CD8-positive, alpha-beta T cell (primary cell): ENCODE measurements at regions of chr3 and their contacts with region 1.

Region 1: GRCh38 chr3:47380601-47381316 is at the start of gene PTPN23:
- DNase-seq: peak; percentile 97 to 99 (median 99)
- ATAC-seq: peak; percentile 77
- H3K4me3 ChIP-seq: peak within 1 kb of the TSS; percentile 59 to 86
- H3K4me3 Mint-ChIP-seq: peak within 1 kb of the TSS; percentile 99
- H3K27ac ChIP-seq: peak within 1 kb of the TSS; percentile 76 to 97
- H3K27ac Mint-ChIP-seq: peak within 1 kb of the TSS; percentile 100
- H3K4me1 ChIP-seq: peaks cover 30% of the 10 kb centered on the region
- H3K4me1 Mint-ChIP-seq: peaks cover 49% of the 10 kb centered on the region
- H3K27me3 ChIP-seq: no peaks in the 10 kb centered on the region
- H3K27me3 Mint-ChIP-seq: no peaks in the 10 kb centered on the region
- CTCF ChIP-seq: no peak
- total RNA-seq, gene PTPN23: 39.2 to 48.3 TPM

Region 2: DNA sequence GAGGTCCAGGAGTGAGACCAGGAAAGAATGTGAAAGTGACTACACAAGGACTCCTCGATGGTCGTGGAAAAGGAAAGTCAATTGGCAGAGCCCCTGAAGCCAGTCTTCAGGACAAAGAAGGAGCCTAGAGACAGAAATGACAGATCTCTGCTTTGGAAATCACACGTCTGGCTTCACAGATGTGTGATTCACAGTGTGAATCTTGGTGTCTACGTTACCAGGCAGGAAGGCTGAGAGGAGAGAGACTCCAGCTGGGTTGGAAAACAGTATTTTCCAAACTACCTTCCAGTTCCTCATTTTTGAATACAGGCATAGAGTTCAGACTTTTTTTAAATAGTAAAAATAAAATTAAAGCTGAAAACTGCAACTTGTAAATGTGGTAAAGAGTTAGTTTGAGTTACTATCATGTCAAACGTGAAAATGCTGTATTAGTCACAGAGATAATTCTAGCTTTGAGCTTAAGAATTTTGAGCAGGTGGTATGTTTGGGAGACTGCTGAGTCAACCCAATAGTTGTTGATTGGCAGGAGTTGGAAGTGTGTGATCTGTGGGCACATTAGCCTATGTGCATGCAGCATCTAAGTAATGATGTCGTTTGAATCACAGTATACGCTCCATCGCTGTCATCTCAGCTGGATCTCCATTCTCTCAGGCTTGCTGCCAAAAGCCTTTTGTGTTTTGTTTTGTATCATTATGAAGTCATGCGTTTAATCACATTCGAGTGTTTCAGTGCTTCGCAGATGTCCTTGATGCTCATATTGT is 1020.8 kb before region 1 on chr3:
- CTCF ChIA-PET with region 1: no interaction called
- POLR2A ChIA-PET with region 1: no interaction called
- intact Hi-C with region 1: no loop called
- DNase-seq: peak in 2 of 9 experiments; percentile 29 to 48
- ATAC-seq: peak; percentile 82
- H3K4me3 ChIP-seq: no peak overlapping the region
- H3K4me3 Mint-ChIP-seq: no peak overlapping the region
- H3K27ac ChIP-seq: peak overlapping the region in 1 of 2 experiments; percentile 24
- H3K27ac Mint-ChIP-seq: peak overlapping the region; percentile 70
- H3K4me1 ChIP-seq: peaks cover 5% of the 10 kb centered on the region
- H3K4me1 Mint-ChIP-seq: peaks cover 48% of the 10 kb centered on the region
- H3K27me3 ChIP-seq: no peaks in the 10 kb centered on the region
- H3K27me3 Mint-ChIP-seq: peaks cover 4% of the 10 kb centered on the region
- CTCF ChIP-seq: no peak

Region 3: GRCh38 chr3:47009225-47010110 is 371.3 kb before region 1 on chr3:
- CTCF ChIA-PET with region 1: no interaction called
- POLR2A ChIA-PET with region 1: no interaction called
- intact Hi-C with region 1: loop called in 1 of 2 experiments (anchors 2 kb)
- DNase-seq: peak; percentile 43 to 92 (median 86)
- ATAC-seq: peak; percentile 91
- H3K4me3 ChIP-seq: peak overlapping the region; percentile 52 to 66
- H3K4me3 Mint-ChIP-seq: peak overlapping the region; percentile 70
- H3K27ac ChIP-seq: peak overlapping the region; percentile 56 to 64
- H3K27ac Mint-ChIP-seq: peak overlapping the region; percentile 83
- H3K4me1 ChIP-seq: peaks cover 8% of the 10 kb centered on the region
- H3K4me1 Mint-ChIP-seq: peaks cover 8% of the 10 kb centered on the region
- H3K27me3 ChIP-seq: no peaks in the 10 kb centered on the region
- H3K27me3 Mint-ChIP-seq: no peaks in the 10 kb centered on the region
- CTCF ChIP-seq: no peak

Region 4: DNA sequence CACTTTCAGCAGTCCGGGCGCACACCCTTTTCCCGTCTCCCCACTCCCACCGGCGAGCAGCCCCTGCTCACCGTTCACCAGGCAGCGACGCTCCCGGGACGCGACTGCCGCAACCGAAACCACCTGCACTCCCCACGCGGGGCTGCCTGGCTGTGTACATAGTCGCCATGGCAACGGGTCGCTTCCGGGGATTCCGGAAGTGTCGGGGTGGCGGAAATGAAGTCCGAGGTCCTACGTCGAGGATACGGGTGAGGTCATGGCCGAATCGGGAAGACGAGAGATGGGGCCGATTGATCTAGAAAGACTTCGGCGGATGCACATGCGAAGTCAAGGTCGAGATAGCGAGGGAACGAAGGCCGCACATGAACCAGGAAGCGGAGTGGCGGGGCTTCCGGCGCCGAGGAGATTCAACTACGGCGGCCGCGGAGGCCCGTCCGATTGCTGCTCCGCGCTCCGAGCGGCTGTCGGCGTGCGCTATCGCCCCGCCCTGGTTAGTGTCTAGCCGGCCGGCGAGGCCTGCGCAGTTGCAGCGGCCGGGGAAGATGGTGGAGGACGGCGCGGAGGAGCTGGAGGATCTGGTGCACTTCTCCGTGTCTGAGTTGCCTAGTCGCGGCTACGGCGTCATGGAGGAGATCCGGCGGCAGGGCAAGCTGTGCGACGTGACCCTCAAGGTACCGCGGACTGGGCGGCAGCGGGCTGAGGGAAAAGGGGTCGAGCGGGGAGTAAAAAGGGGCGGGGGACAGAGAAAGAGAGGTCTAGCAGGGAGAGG is 98.2 kb before region 1 on chr3 and contains the starts of genes KIF9 and KLHL18:
- CTCF ChIA-PET with region 1: no interaction called
- POLR2A ChIA-PET with region 1: interaction called, 5 read pairs
- intact Hi-C with region 1: loop called (anchors 1 kb)
- DNase-seq: peak; percentile 92 to 99 (median 96)
- ATAC-seq: peak; percentile 86
- H3K4me3 ChIP-seq: peak within 1 kb of the TSS; percentile 75 to 79
- H3K4me3 Mint-ChIP-seq: peak within 1 kb of the TSS; percentile 97
- H3K27ac ChIP-seq: peak within 1 kb of the TSS; percentile 98 to 99
- H3K27ac Mint-ChIP-seq: peak within 1 kb of the TSS; percentile 99
- H3K4me1 ChIP-seq: peaks cover 32% of the 10 kb centered on the region
- H3K4me1 Mint-ChIP-seq: peaks cover 40% of the 10 kb centered on the region
- H3K27me3 ChIP-seq: no peaks in the 10 kb centered on the region
- H3K27me3 Mint-ChIP-seq: no peaks in the 10 kb centered on the region
- CTCF ChIP-seq: no peak
- total RNA-seq, gene KIF9: 11.7 to 12.2 TPM
- total RNA-seq, gene KLHL18: 61.6 to 62.8 TPM

Region 5: DNA sequence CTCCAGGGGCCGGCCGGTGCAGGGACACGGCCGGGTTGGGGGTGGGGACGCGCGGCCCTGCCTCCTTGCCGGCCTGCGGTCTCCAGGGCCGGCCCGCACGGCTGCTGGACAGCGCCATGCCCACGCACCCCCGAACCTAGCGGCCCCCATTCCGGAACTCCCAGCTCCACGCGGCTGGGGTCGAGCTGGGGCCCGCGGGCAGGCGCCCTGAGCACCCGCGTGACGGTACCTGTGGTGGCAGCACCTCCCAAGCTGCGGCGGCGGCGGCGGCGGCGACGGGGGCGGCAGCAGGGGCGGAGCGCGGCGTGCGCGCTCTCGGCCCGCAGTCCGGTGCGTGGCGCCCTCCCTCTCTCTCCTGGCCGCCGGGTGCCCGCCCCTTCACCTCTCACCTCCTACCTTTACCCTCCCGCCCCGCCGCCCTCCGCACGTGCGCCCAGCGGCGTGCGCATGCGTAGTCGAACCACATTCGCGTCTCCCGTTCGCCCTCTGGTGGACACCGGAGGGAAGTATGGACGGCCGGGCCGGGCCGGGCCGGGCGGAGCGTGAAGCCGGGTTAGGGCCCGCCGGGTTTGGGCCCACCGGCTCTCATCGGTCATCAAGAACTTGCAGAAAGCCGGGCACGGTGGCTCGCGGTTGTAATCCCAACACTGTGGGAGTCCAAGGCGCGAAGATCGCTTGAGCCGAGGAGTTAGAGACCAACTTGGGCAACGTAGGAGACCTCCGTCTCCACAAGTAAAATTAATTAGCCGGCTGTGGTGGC is 95.0 kb after region 1 on chr3 and contains the start of gene SCAP:
- CTCF ChIA-PET with region 1: no interaction called
- POLR2A ChIA-PET with region 1: no interaction called
- intact Hi-C with region 1: loop called (anchors 1 kb)
- DNase-seq: peak; percentile 90 to 98 (median 96)
- ATAC-seq: peak; percentile 90
- H3K4me3 ChIP-seq: peak within 1 kb of the TSS; percentile 58 to 83
- H3K4me3 Mint-ChIP-seq: peak within 1 kb of the TSS; percentile 93
- H3K27ac ChIP-seq: peak within 1 kb of the TSS; percentile 69 to 86
- H3K27ac Mint-ChIP-seq: peak within 1 kb of the TSS; percentile 94
- H3K4me1 ChIP-seq: peaks cover 28% of the 10 kb centered on the region
- H3K4me1 Mint-ChIP-seq: peaks cover 43% of the 10 kb centered on the region
- H3K27me3 ChIP-seq: no peaks in the 10 kb centered on the region
- H3K27me3 Mint-ChIP-seq: no peaks in the 10 kb centered on the region
- CTCF ChIP-seq: peak; percentile 97
- total RNA-seq, gene SCAP: 72.8 to 76.6 TPM

Region 6: DNA sequence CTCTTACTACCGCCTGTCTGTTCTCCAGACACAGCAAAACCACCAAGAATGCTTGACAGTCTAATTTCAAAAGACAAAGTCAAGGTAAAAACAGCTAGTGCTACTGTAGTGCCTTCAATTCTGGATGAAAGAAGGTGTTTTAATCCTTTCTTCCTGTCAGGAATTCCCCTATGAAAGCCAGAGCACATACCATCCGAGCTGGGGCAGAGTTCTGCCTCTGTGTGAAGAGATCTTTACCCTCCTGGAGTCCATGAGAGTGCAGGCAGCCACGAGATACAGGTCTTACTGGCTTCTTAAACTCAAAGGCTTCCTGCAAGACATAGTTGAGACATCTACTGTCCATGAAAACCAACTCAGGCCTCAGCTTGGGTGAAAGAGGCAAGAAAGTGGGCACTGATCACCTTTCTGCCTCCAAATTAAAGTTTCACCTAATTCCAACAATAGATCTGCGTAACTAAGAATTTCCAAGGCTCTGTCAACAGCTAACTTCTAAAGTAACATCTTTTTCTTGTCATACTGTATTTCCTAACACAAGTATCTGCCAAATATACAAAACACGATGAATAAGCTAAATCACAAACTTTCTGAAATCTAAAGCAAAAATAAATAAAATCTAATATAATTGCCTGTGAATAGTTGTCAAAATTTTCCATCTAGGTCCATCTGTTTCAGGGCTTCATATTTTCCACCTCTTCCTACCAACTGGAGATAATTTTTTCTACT is 799.9 kb after region 1 on chr3:
- CTCF ChIA-PET with region 1: no interaction called
- POLR2A ChIA-PET with region 1: no interaction called
- intact Hi-C with region 1: no loop called
- DNase-seq: no peak
- ATAC-seq: no peak
- H3K4me3 ChIP-seq: no peak overlapping the region
- H3K4me3 Mint-ChIP-seq: no peak overlapping the region
- H3K27ac ChIP-seq: no peak overlapping the region
- H3K27ac Mint-ChIP-seq: no peak overlapping the region
- H3K4me1 ChIP-seq: no peaks in the 10 kb centered on the region
- H3K4me1 Mint-ChIP-seq: no peaks in the 10 kb centered on the region
- H3K27me3 ChIP-seq: no peaks in the 10 kb centered on the region
- H3K27me3 Mint-ChIP-seq: peaks cover 6% of the 10 kb centered on the region
- CTCF ChIP-seq: no peak